ENCODE measurements at regions of chr16 and their contacts with region 1.

Region 1: GRCh38 chr16:16191493-16192167 is 31.7 kb downstream of the ABCC6 start:
- DNase-seq: no peak
- H3K4me3 Mint-ChIP-seq: no peak overlapping the region
- H3K27ac Mint-ChIP-seq: no peak overlapping the region
- H3K4me1 Mint-ChIP-seq: no peaks in the 10 kb centered on the region
- H3K27me3 Mint-ChIP-seq: peaks cover 9% of the 10 kb centered on the region

Region 2: DNA sequence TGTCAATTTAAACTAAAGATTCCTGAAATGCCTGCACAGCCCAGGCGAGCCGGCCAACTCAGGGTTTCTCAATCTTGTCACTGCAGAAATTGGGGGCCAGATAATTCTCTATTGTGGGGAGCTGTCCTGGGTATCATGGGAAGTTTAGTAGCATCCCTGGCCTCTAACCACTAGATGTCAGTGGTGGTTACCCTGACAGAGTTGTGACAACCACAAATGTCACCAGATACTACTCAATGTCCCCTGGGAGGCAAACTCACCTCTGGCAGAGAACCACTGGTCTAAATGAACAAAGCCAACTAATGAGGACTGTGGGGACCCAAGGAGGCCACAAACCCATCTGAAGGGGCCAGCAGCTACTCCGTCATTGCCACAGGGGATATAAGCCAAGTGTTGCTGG is 425.8 kb before region 1 on chr16:
- CTCF ChIA-PET with region 1: interaction called, 3 read pairs
- POLR2A ChIA-PET with region 1: no interaction called
- intact Hi-C with region 1: loop called (anchors 5 kb)
- DNase-seq: peak; percentile 31
- H3K4me3 Mint-ChIP-seq: no peak overlapping the region
- H3K27ac Mint-ChIP-seq: no peak overlapping the region
- H3K4me1 Mint-ChIP-seq: no peaks in the 10 kb centered on the region
- H3K27me3 Mint-ChIP-seq: peaks cover 14% of the 10 kb centered on the region

Region 3: GRCh38 chr16:17901309-17901708 is 1709.7 kb after region 1 on chr16:
- CTCF ChIA-PET with region 1: no interaction called
- POLR2A ChIA-PET with region 1: no interaction called
- intact Hi-C with region 1: no loop called
- DNase-seq: no peak
- H3K4me3 Mint-ChIP-seq: no peak overlapping the region
- H3K27ac Mint-ChIP-seq: no peak overlapping the region
- H3K4me1 Mint-ChIP-seq: no peaks in the 10 kb centered on the region
- H3K27me3 Mint-ChIP-seq: peaks cover 8% of the 10 kb centered on the region